Activated CD4-positive, alpha-beta T cell treated with anti-CD3 and anti-CD28 coated beads, Interleukin-2, amount 10 ng/mL, durations not matched to agents 7 days and 5 days (primary cell): ENCODE measurements at regions of chr12 and their contacts with region 1.

Region 1: GRCh38 chr12:47963340-47964040 is at the start of gene TMEM106C:
- DNase-seq: peak; percentile 91
- H3K4me3 Mint-ChIP-seq: peak within 1 kb of the TSS; percentile 96
- H3K27ac Mint-ChIP-seq: peak within 1 kb of the TSS; percentile 86
- H3K4me1 Mint-ChIP-seq: peaks cover 38% of the 10 kb centered on the region
- H3K27me3 Mint-ChIP-seq: peaks cover 24% of the 10 kb centered on the region
- total RNA-seq, gene TMEM106C: 145 to 181 TPM

Region 2: GRCh38 chr12:47715393-47715876 is 248.1 kb before region 1 on chr12:
- CTCF ChIA-PET with region 1: no interaction called
- POLR2A ChIA-PET with region 1: no interaction called
- DNase-seq: peak; percentile 87
- H3K4me3 Mint-ChIP-seq: no peak overlapping the region
- H3K27ac Mint-ChIP-seq: peak overlapping the region; percentile 63
- H3K4me1 Mint-ChIP-seq: peaks cover 31% of the 10 kb centered on the region
- H3K27me3 Mint-ChIP-seq: no peaks in the 10 kb centered on the region

Region 3: DNA sequence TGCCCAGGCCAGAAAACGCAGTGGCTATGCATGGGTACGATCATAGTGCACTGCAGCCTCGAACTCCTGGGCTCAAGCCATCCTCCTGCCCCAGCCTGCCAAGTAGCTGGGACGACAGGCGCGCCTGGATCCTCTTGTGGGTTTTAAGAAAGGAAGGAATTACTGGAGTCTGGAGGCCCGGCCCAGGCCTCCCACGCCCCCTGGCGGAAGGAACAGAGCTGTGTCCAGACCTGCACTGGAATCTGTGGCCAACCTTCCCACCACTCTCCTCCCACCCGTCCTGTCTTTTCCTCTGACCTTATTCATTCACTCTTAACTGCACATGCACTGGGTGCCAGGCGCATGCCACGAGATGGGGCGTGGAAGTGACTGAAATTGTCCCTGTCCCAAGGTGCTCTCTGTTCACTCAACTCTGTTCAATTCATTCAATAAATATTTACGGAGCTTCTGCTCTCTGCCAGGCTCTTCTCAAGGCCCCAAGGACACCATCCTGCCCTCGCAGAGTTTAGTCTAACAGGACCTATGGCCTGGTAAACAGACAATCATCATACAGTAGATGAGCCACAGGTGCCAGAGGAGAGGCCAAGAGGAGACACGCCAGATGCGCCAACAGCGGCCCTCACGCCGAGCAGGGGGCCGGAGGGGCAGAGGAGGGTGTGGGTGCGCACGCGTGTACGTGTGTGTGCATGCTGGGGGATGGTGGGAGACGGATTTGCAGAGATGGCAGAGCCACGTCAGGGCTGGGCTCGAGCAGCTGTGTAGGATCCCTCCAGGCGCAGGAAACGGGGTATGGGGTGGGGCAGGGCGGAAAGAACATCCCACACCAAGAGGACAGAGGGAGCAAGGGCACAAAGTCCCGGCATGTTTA is 13.8 kb before region 1 on chr12:
- CTCF ChIA-PET with region 1: interaction called, 10 read pairs
- POLR2A ChIA-PET with region 1: no interaction called
- DNase-seq: peak; percentile 54
- H3K4me3 Mint-ChIP-seq: no peak overlapping the region
- H3K27ac Mint-ChIP-seq: no peak overlapping the region
- H3K4me1 Mint-ChIP-seq: peaks cover 9% of the 10 kb centered on the region
- H3K27me3 Mint-ChIP-seq: peaks cover 8% of the 10 kb centered on the region